ENCODE measurements at regions of chr6 and their contacts with region 1.

Region 1: DNA sequence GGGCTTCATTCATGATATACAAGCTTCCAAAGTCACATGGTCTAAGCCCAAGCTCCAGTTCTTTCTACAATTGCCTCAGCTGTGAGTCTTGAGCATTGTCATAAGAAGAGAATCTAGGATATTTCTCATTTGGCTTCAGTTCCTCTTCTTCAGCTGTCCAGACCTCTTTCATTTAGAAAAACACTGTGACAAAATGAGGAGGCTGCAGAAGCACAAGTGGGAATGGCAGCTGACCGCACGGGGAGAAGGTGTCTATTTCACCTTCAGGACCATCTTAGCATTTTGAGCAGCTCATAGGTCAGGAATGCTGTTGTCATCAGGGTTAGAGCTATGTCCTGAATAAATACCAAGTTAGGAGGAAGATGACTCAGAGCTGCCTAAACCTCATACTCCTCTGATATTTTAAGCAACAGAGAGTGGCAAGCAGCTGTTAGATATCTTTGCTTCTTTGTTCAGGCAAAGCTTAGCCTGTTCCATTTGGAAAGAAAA is 390.1 kb upstream of the CITED2 start:
- DNase-seq: no peak
- ATAC-seq: peak; percentile 89 to 99

Region 2: DNA sequence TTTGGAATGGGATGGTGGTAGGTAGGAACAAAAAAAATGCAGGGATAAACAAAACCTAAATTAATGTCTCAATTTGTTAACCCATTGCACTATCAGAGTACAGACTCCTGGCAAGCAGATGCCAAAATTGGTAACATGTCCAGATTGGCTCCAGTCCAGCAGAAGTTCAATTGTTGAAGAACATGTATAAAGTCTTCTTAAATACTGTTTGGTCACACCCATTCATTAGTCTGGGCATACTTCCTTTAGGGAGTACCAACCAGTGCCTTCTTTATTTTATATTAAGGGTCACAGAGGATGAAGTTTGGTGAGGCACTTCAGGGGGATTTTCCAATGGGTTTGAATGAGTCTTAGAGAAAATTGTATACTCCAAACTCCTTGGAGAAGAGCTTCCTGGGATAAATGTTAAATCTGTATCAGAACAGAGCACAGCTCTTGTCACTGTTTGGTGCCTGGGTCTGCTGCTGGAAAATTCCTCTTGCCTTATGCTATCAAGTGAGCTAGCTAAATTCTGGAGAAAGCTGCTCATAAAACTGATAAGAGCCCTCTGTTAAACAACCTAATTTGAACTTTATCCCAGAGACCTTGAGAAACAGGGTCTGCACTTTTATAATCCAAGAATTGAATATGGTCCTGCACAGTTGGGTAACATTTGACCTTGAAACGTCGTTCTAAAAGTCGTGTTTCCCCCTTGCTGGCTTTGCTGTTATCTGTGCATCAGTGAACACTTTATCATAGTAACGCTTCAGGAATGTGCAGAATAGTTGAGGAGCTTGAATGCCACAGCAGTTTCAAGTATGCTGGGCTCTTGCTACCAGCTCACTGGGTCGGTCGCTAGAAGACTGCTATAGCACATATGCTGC is 56.0 kb before region 1 on chr6:
- intact Hi-C with region 1: no loop called
- DNase-seq: no peak
- ATAC-seq: peak; percentile 59 to 77

Region 3: DNA sequence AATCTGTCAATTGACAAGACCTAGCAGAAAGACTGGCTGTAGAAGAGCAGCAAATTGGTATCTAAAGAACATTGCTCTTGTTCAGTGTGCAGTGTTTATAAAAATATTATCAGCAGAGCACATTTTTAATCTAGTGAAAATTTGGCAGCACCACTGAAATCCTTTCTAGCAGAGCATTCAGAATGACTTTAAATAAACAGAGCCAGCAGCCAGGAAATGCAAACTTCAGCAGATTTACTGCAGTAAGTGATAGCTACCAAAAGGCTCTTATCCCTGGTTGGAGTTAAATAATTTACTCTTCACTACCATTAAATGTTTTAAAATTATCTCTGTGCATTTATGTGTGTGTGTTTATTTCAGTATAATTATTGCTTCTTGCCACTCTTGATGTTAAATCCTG is 200.9 kb after region 1 on chr6:
- intact Hi-C with region 1: loop called in 1 of 2 experiments (anchors 10 kb)
- DNase-seq: no peak
- ATAC-seq: peak; percentile 34 to 60

Region 4: GRCh38 chr6:140078561-140079125 is 314.1 kb after region 1 on chr6:
- intact Hi-C with region 1: loop called in 1 of 2 experiments (anchors 10 kb)
- DNase-seq: no peak
- ATAC-seq: peak; percentile 56 to 77

Measured in left cardiac atrium (tissue), 4 donors.